Panc1 (cell line): ENCODE measurements at regions of chr2 and their contacts with region 1.

Region 1: GRCh38 chr2:69565431-69565839 is 78.1 kb downstream of the AAK1 start:
- DNase-seq: peak; percentile 41
- ATAC-seq: peak; percentile 53; the same call in 1 of the 2 replicates
- H3K4me3 ChIP-seq: no peak overlapping the region
- H3K27ac ChIP-seq: no peak overlapping the region
- H3K4me1 ChIP-seq: peaks cover 48% of the 10 kb centered on the region
- H3K27me3 ChIP-seq: no peaks in the 10 kb centered on the region
- CTCF ChIP-seq: peak; percentile 92

Region 2: DNA sequence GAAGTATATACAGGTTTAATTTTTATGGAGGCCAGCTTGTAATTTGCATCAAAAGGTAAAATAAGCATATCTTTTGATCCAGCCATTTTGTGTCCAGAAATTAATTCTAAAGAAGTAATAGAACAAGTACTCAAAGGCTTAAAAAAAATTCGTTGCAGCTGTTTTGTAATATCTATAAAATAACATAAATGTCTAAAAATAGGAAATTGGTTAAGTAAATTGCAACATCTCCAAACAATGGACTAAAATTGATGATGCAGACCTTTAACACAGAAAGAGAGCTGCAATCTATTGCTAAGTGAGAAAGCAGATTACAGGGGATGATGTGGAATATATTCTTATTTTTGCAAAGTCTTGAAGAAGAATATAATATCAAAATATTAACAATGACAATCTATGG is 58.7 kb after region 1 on chr2:
- CTCF ChIA-PET with region 1: no interaction called
- POLR2A ChIA-PET with region 1: no interaction called
- in situ Hi-C with region 1: no loop called
- intact Hi-C with region 1: no loop called
- DNase-seq: no peak
- ATAC-seq: no peak
- H3K4me3 ChIP-seq: no peak overlapping the region
- H3K27ac ChIP-seq: no peak overlapping the region
- H3K4me1 ChIP-seq: peaks cover 18% of the 10 kb centered on the region
- H3K27me3 ChIP-seq: no peaks in the 10 kb centered on the region
- CTCF ChIP-seq: no peak

Region 3: GRCh38 chr2:69634196-69634821 is 68.9 kb after region 1 on chr2:
- CTCF ChIA-PET with region 1: no interaction called
- POLR2A ChIA-PET with region 1: no interaction called
- in situ Hi-C with region 1: no loop called
- intact Hi-C with region 1: loop called (anchors 10 kb)
- DNase-seq: no peak
- ATAC-seq: no peak
- H3K4me3 ChIP-seq: no peak overlapping the region
- H3K27ac ChIP-seq: no peak overlapping the region
- H3K4me1 ChIP-seq: peaks cover 12% of the 10 kb centered on the region; the same call in 1 of the 2 replicates
- H3K27me3 ChIP-seq: no peaks in the 10 kb centered on the region
- CTCF ChIP-seq: no peak

Region 4: GRCh38 chr2:69816923-69817542 is 251.6 kb after region 1 on chr2:
- CTCF ChIA-PET with region 1: no interaction called
- POLR2A ChIA-PET with region 1: no interaction called
- in situ Hi-C with region 1: no loop called
- intact Hi-C with region 1: loop called (anchors 10 kb)
- DNase-seq: peak; percentile 75
- ATAC-seq: peak; percentile 85; the same call in 1 of the 2 replicates
- H3K4me3 ChIP-seq: no peak overlapping the region
- H3K27ac ChIP-seq: no peak overlapping the region
- H3K4me1 ChIP-seq: no peaks in the 10 kb centered on the region
- H3K27me3 ChIP-seq: no peaks in the 10 kb centered on the region
- CTCF ChIP-seq: peak; percentile 81; the same call in 1 of the 2 replicates